ENCODE measurements at regions of chr9 and their contacts with region 1.

Region 1: DNA sequence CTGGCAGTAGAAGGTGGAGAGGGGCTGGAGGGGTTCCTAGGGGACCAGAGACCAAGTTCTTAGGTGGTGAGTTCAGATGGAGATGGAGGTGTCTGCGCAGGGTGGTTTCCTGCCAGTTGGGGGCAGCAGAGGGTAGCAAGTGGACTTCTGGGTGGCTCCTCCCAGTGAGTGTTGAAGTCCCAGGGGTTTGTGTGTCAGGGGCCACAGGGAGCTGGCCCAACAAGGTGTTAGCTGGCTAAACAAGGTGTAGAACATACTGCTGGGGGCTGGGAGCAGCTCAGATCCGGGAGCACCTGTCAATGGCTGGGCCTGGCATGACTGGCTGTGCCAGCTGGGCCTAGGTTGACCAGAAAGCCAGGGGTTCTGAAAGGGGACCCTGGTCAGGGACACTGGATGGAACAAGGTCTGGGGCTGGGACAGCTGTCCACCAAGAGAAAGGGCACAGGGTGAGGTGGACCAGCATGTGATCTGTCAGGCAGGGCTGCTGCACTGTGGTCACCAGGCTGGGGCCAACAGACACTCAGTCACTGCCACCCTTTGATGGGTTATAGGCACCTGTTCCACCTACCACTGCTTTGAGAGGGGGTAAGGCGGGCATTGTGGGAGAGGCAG is 35.6 kb downstream of the DAB2IP start:
- DNase-seq: peak; percentile 65 to 70
- ATAC-seq: peak; percentile 71 to 94 (median 92)
- H3K4me3 ChIP-seq: no peak overlapping the region
- H3K4me3 Mint-ChIP-seq: no peak overlapping the region
- H3K27ac ChIP-seq: no peak overlapping the region
- H3K27ac Mint-ChIP-seq: no peak overlapping the region
- H3K4me1 ChIP-seq: no peaks in the 10 kb centered on the region
- H3K4me1 Mint-ChIP-seq: peaks cover 0 to 6% of the 10 kb centered on the region in 2 donors
- H3K27me3 ChIP-seq: no peaks in the 10 kb centered on the region
- H3K27me3 Mint-ChIP-seq: peaks cover 11 to 15% of the 10 kb centered on the region in 2 donors
- CTCF ChIP-seq: peak; percentile 73

Region 2: GRCh38 chr9:121992571-121993212 is 305.7 kb after region 1 on chr9:
- intact Hi-C with region 1: loop called (anchors 1 kb)
- DNase-seq: peak; percentile 20 to 77
- ATAC-seq: peak; percentile 54 to 77 (median 61)
- H3K4me3 ChIP-seq: no peak overlapping the region
- H3K4me3 Mint-ChIP-seq: no peak overlapping the region
- H3K27ac ChIP-seq: no peak overlapping the region
- H3K27ac Mint-ChIP-seq: no peak overlapping the region
- H3K4me1 ChIP-seq: no peaks in the 10 kb centered on the region
- H3K4me1 Mint-ChIP-seq: no peaks in the 10 kb centered on the region
- H3K27me3 ChIP-seq: no peaks in the 10 kb centered on the region
- H3K27me3 Mint-ChIP-seq: no peaks in the 10 kb centered on the region
- CTCF ChIP-seq: peak; percentile 87

Measured in natural killer cell (primary cell).